Mammary epithelial cell (primary cell): ENCODE measurements at regions of chr5 and their contacts with region 1.

Region 1: DNA sequence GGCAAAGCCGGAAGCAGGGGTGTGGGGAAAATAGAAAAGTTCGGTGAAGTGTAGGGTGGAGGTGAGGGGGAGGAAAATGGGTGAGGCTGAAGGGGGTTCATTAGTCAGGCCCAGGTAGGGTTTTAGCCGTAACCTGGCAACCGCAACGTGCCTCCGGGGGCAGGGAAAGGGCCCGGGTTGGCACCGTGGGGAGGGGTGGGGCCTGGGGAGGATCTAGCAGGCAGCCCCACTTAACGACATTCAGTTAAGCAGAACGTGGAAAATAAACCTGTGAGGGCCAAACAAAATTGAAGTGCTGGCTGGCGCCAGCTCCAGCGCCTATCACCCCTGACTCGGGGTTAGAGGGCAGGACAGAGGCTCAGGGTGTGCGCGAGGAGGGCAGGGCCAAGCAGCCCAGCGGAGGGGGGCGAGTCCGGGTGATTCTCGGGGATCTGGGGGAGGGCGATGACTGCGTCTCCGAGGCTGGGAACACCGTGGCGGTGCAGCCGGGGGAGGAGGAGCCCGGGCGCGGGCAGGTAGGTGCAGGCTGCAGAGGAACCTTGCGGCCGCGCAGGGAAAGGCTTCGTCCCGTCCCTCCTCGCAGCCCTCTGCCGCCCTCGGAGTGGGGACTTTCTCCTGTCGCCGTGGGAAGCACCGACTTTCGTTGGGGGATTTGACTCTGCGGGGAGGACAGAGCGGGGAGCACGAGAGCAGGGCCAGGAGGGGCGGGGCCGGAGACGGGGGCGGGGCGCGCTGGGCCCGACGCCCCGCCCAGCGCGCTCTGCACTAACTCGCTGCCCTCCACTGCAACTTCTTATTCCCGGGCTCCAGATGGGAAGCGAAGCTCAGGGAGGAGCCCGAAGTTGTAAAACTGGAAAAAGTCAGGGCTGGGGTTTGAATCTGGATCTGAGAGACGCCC is 5.1 kb downstream of the RGS14 start:
- DNase-seq: peak; percentile 66
- H3K4me3 ChIP-seq: peak overlapping the region; percentile 47 to 67 (median 63)
- H3K27ac ChIP-seq: no peak overlapping the region
- H3K4me1 ChIP-seq: peaks cover 22% of the 10 kb centered on the region
- H3K27me3 ChIP-seq: no peaks in the 10 kb centered on the region
- CTCF ChIP-seq: peak in 1 of 2 donors; percentile 10

Region 2: GRCh38 chr5:177327539-177328522 is 35.0 kb before region 1 on chr5:
- CTCF ChIA-PET with region 1: no interaction called
- dilution Hi-C with region 1: loop called (anchors 5 kb)
- in situ Hi-C with region 1: no loop called
- intact Hi-C with region 1: no loop called
- DNase-seq: peak; percentile 72
- H3K4me3 ChIP-seq: peak overlapping the region in 1 of 3 experiments; percentile 2
- H3K27ac ChIP-seq: peak overlapping the region; percentile 63
- H3K4me1 ChIP-seq: peaks cover 34% of the 10 kb centered on the region
- H3K27me3 ChIP-seq: no peaks in the 10 kb centered on the region
- CTCF ChIP-seq: peak in 1 of 2 donors; percentile 3

Region 3: DNA sequence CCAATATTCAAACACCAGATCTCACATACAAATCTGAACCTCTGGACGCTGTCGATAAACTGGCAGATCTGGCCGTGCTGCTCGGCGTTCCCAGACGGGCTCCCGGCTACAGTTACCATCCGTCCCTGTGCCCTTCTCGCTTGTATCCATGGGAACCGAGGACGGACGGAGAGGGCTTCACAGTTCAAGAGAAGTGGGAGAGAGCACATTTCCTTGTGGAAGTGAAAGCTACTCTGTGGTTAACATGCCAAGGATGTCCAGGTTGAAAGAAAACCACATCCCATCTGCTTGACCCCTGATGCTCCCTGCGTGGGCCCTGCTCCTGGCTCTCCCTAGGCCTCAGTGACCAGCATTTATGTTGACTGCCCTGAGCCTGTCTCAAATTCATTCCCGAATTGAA is 116.9 kb after region 1 on chr5:
- CTCF ChIA-PET with region 1: no interaction called
- dilution Hi-C with region 1: loop called (anchors 10 kb)
- in situ Hi-C with region 1: no loop called
- intact Hi-C with region 1: no loop called
- DNase-seq: no peak
- H3K4me3 ChIP-seq: no peak overlapping the region
- H3K27ac ChIP-seq: no peak overlapping the region
- H3K4me1 ChIP-seq: peaks cover 9% of the 10 kb centered on the region
- H3K27me3 ChIP-seq: no peaks in the 10 kb centered on the region
- CTCF ChIP-seq: no peak